ENCODE measurements at regions of chr4 and their contacts with region 1.

Region 1: DNA sequence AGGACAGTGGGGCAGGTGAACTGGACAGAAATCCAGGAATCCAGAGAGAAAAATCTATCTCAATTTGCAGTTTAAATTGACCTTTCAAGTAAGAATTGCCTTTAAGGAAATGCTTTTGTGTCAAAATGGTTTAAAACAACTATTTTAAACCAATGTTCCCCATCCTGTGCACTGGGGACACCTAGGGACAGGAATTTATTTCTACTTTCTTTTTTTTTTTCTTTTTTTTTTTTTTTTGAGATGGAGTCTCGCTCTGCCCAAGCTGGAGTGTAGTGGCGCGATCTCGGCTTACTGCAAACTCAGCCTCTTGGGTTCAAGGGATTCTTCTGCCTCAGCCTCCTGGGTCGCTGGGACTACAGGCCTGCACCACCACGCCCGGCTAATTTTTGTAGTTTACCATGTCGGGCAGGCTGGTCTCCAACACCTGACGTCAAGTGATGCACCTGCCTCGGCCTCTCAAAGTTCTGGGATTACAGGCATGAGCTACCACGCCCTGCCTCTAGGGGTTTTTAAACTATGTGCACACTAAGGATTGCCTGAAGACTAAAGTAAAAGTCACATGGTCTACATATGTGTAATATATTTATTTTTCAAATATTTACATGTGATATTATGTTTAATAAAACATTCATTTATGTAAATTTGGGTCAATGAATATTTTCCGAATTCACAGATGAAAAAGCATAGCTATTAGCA is 1213.4 kb downstream of the STIM2 start:
- DNase-seq: peak; percentile 59
- ATAC-seq: peak; percentile 98
- H3K4me3 ChIP-seq: peak overlapping the region; percentile 36 to 47; a peak in 3 of 4 replicates
- H3K27ac ChIP-seq: no peak overlapping the region
- H3K4me1 ChIP-seq: peaks cover 2 to 5% of the 10 kb centered on the region in 2 experiments; a peak in 1 of 4 replicates
- H3K27me3 ChIP-seq: no peaks in the 10 kb centered on the region
- CTCF ChIP-seq: peak; percentile 50 to 53 (median 53); a peak in 5 of 6 replicates
- POLR2A ChIP-seq: no peak
- RAD21 ChIP-seq: peak; percentile 38; the same call in 1 of the 2 replicates

Region 2: DNA sequence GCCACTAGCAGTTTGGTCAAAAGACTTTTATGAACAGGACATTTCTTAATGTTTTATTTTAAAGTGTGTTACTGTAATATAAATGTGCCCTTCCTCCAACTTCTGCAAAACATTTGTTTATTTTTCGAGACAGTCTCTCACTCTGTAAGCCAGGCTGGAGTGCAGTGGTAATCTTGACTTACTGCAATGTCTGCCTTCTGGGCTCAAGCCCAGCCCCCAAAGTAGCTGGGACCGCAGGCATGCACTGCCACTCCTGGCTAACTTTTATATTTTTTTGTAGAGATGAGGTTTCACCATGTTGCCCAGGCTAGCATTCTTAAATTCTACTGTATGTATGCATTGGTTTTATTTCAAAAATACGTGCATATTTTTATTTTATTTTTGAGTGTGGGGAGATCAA is 11.4 kb before region 1 on chr4:
- CTCF ChIA-PET with region 1: interaction called, 13 read pairs
- POLR2A ChIA-PET with region 1: interaction called, 8 read pairs
- RAD21 ChIA-PET with region 1: no interaction called
- intact Hi-C with region 1: no loop called
- DNase-seq: no peak
- ATAC-seq: no peak
- H3K4me3 ChIP-seq: no peak overlapping the region
- H3K27ac ChIP-seq: no peak overlapping the region
- H3K4me1 ChIP-seq: no peaks in the 10 kb centered on the region
- H3K27me3 ChIP-seq: no peaks in the 10 kb centered on the region
- CTCF ChIP-seq: no peak
- POLR2A ChIP-seq: no peak
- RAD21 ChIP-seq: no peak

Region 3: GRCh38 chr4:28373601-28374000 is 299.6 kb after region 1 on chr4:
- CTCF ChIA-PET with region 1: no interaction called
- POLR2A ChIA-PET with region 1: no interaction called
- RAD21 ChIA-PET with region 1: no interaction called
- intact Hi-C with region 1: no loop called
- DNase-seq: no peak
- ATAC-seq: no peak
- H3K4me3 ChIP-seq: no peak overlapping the region
- H3K27ac ChIP-seq: no peak overlapping the region
- H3K4me1 ChIP-seq: no peaks in the 10 kb centered on the region
- H3K27me3 ChIP-seq: no peaks in the 10 kb centered on the region
- CTCF ChIP-seq: no peak
- POLR2A ChIP-seq: no peak
- RAD21 ChIP-seq: no peak

Region 4: GRCh38 chr4:29121586-29121985 is 1047.6 kb after region 1 on chr4:
- CTCF ChIA-PET with region 1: no interaction called
- POLR2A ChIA-PET with region 1: no interaction called
- RAD21 ChIA-PET with region 1: no interaction called
- intact Hi-C with region 1: no loop called
- DNase-seq: no peak
- ATAC-seq: no peak
- H3K4me3 ChIP-seq: no peak overlapping the region
- H3K27ac ChIP-seq: no peak overlapping the region
- H3K4me1 ChIP-seq: no peaks in the 10 kb centered on the region
- H3K27me3 ChIP-seq: no peaks in the 10 kb centered on the region
- CTCF ChIP-seq: no peak
- POLR2A ChIP-seq: no peak
- RAD21 ChIP-seq: no peak